ENCODE measurements at regions of chr7 and their contacts with region 1.

Region 1: GRCh38 chr7:151368136-151368571 is 26.5 kb downstream of the NUB1 start:
- DNase-seq: peak; percentile 86
- H3K4me3 Mint-ChIP-seq: no peak overlapping the region
- H3K27ac Mint-ChIP-seq: no peak overlapping the region
- H3K4me1 Mint-ChIP-seq: peaks cover 7% of the 10 kb centered on the region
- H3K27me3 Mint-ChIP-seq: no peaks in the 10 kb centered on the region

Region 2: DNA sequence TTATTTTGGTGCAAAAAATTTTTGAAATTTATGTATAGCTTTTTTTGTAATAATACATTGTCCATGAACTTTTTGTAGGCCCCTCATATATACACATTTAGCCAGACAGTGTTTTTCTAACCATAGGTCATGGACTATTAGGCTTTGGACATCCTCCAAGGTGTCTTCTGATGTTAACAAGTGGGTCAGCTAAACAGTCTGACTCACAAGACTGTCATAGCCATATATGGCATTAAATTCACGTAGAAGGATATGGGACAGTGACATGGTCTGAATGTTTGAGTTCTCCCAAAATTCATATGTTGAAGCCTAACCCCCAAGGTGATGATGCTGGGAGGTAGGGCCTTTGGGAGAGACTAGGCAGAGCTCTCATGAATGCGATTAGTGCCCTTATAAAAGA is 40.5 kb before region 1 on chr7:
- CTCF ChIA-PET with region 1: no interaction called
- intact Hi-C with region 1: no loop called
- DNase-seq: no peak
- H3K4me3 Mint-ChIP-seq: no peak overlapping the region
- H3K27ac Mint-ChIP-seq: no peak overlapping the region
- H3K4me1 Mint-ChIP-seq: no peaks in the 10 kb centered on the region
- H3K27me3 Mint-ChIP-seq: no peaks in the 10 kb centered on the region

Region 3: GRCh38 chr7:151432791-151433521 is 64.8 kb after region 1 on chr7:
- CTCF ChIA-PET with region 1: interaction called, 7 read pairs
- intact Hi-C with region 1: loop called (anchors 1 kb)
- DNase-seq: peak; percentile 91
- H3K4me3 Mint-ChIP-seq: peak overlapping the region; percentile 46
- H3K27ac Mint-ChIP-seq: peak overlapping the region; percentile 87
- H3K4me1 Mint-ChIP-seq: peaks cover 47% of the 10 kb centered on the region
- H3K27me3 Mint-ChIP-seq: no peaks in the 10 kb centered on the region

Region 4: GRCh38 chr7:151519765-151520418 is 151.7 kb after region 1 on chr7 and contains the start of gene RHEB:
- CTCF ChIA-PET with region 1: no interaction called
- intact Hi-C with region 1: no loop called
- DNase-seq: peak; percentile 99
- H3K4me3 Mint-ChIP-seq: peak within 1 kb of the TSS; percentile 98
- H3K27ac Mint-ChIP-seq: peak within 1 kb of the TSS; percentile 98
- H3K4me1 Mint-ChIP-seq: peaks cover 38% of the 10 kb centered on the region
- H3K27me3 Mint-ChIP-seq: no peaks in the 10 kb centered on the region
- total RNA-seq, gene RHEB: 58.7 to 62.7 TPM

Region 5: DNA sequence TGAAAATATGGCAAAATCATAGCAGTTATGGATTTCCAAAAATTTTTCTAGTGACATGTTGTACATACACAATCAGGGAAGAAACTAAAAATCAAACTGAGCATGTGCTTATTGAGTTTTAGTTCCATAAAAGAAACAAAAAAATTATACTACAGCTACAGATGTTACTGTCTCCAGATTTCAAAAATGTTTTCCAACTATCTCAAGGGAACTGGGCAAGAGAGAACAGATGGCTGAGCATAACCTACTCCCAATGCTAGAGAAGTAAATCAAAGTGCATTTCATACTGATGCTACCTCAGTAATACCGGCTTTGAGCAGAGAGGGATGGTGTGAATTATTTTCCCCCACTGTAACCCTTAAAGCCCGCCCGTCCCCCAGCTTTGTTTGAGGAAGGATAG is 1108.4 kb after region 1 on chr7:
- CTCF ChIA-PET with region 1: no interaction called
- intact Hi-C with region 1: no loop called
- DNase-seq: no peak
- H3K4me3 Mint-ChIP-seq: no peak overlapping the region
- H3K27ac Mint-ChIP-seq: no peak overlapping the region
- H3K4me1 Mint-ChIP-seq: no peaks in the 10 kb centered on the region
- H3K27me3 Mint-ChIP-seq: no peaks in the 10 kb centered on the region